A549 (cell line): ENCODE measurements at regions of chr1 and their contacts with region 1.

Region 1: GRCh38 chr1:205485338-205486228 is 18.9 kb upstream of the CDK18 start:
- DNase-seq: peak; percentile 75 to 94
- ATAC-seq: peak; percentile 75 to 89
- H3K4me3 ChIP-seq: no peak overlapping the region
- H3K27ac ChIP-seq: no peak overlapping the region
- H3K4me1 ChIP-seq: no peaks in the 10 kb centered on the region
- CTCF ChIP-seq: peak; percentile 92
- EP300 ChIP-seq: no peak
- POLR2A ChIP-seq: no peak
- RAD21 ChIP-seq: peak; percentile 92 to 93

Region 2: GRCh38 chr1:205172729-205173366 is 312.7 kb before region 1 on chr1:
- CTCF ChIA-PET with region 1: no interaction called
- POLR2A ChIA-PET with region 1: no interaction called
- DNase-seq: peak; percentile 76 to 88
- ATAC-seq: peak; percentile 84 to 87
- H3K4me3 ChIP-seq: no peak overlapping the region
- H3K27ac ChIP-seq: peak overlapping the region; percentile 49 to 84; a peak in 5 of 6 replicates
- H3K4me1 ChIP-seq: peaks cover 47% of the 10 kb centered on the region
- CTCF ChIP-seq: no peak
- EP300 ChIP-seq: peak in 1 of 2 experiments; percentile 23; a peak in 1 of 5 replicates
- POLR2A ChIP-seq: no peak
- RAD21 ChIP-seq: no peak

Region 3: DNA sequence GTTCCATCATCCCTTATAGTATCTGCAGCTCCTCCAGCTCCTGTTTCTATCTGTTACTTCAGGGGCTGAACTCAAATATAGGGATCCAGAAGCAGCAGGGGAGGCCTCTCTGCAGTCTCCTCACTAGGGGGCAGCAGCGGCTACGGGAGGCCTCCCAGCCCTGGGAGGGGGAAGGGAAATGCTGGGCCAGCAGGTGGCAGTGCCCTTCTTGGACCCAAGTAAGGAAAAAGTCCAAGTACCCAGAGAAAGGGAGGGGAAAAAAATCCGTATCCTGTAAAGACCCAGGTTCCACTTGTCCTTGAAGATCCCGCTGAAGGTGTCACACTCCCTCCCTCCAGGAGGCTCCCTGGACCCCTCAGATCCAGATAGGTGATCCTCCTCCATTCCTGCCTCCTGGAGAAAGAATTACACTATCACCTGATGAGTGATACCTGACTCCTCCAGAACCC is 149.9 kb before region 1 on chr1:
- CTCF ChIA-PET with region 1: interaction called, 161 read pairs
- POLR2A ChIA-PET with region 1: no interaction called
- DNase-seq: peak; percentile 89 to 90
- ATAC-seq: peak; percentile 91 to 97
- H3K4me3 ChIP-seq: no peak overlapping the region
- H3K27ac ChIP-seq: no peak overlapping the region
- H3K4me1 ChIP-seq: peaks cover under 1% of the 10 kb centered on the region; the same call in 1 of the 3 replicates
- CTCF ChIP-seq: peak; percentile 99
- EP300 ChIP-seq: no peak
- POLR2A ChIP-seq: no peak
- RAD21 ChIP-seq: peak; percentile 88 to 92

Region 4: DNA sequence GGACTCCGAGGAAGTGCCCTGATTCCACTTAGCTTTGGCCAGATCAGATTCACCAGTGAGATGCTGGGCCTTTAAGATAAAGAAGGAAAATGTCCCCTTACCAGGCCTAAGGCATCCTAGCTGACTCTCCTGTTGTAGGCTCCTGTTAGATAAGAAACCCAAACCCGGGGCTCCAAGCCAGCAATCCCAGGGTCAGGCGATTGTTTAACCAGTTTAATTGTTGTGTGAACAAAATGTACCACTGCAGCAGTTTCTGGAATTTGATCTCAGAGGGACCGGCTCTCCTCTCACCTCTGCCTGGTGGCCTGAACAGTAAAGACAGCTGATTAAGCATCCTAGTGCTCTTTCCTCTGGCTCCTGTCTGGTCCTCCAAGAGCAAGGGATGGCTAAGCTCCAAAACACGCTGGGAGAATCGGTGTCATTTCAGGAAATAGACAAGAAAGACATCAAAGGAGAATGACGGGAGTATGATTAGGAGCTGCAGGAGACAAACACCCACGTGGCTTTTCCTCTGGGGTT is 119.6 kb before region 1 on chr1:
- CTCF ChIA-PET with region 1: interaction called, 14 read pairs
- POLR2A ChIA-PET with region 1: no interaction called
- DNase-seq: no peak
- ATAC-seq: peak; percentile 53 to 59; a peak in 3 of 6 replicates
- H3K4me3 ChIP-seq: no peak overlapping the region
- H3K27ac ChIP-seq: peak overlapping the region in 1 of 2 experiments; percentile 0; a peak in 1 of 6 replicates
- H3K4me1 ChIP-seq: peaks cover 12% of the 10 kb centered on the region
- CTCF ChIP-seq: no peak
- EP300 ChIP-seq: no peak
- POLR2A ChIP-seq: no peak
- RAD21 ChIP-seq: no peak

Region 5: GRCh38 chr1:205416322-205416721 is 69.3 kb before region 1 on chr1:
- CTCF ChIA-PET with region 1: interaction called, 20 read pairs
- POLR2A ChIA-PET with region 1: no interaction called
- DNase-seq: no peak
- ATAC-seq: no peak
- H3K4me3 ChIP-seq: no peak overlapping the region
- H3K27ac ChIP-seq: no peak overlapping the region
- H3K4me1 ChIP-seq: no peaks in the 10 kb centered on the region
- CTCF ChIP-seq: no peak
- EP300 ChIP-seq: no peak
- POLR2A ChIP-seq: no peak
- RAD21 ChIP-seq: no peak

Region 6: DNA sequence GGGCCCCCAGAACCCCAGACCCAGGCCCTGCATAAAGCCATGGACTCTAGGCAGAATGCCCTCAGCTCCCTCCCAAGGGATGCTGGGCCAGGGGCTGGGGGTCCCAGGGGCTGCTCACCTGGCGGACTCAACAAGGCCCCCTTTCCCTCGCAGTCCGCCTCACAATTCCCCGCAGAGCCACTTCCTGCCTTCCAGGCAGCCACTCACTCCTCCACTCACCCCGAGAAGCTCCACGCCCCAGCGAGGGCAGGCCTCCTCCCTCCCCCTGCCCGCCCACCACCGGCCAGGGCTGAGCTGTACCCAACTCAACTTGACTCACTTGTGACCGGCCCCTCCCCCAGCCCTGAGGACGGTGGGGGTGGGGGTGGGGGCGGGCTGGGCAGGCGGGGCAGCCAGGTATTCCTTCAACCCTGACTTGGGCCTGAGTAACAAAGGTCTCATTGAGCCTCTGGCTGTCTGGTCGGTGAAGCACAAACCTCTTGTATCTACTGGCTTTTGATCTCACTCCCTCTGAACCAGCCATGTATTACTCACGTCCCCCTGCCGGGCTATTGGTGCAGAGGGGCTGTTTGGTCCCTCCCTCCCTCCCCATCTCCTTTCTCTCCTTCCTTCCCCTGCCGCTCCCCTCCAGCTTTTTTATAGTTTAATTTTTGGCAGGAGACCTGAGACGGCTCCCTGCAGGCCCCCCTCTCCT is 35.7 kb before region 1 on chr1:
- CTCF ChIA-PET with region 1: interaction called, 46 read pairs
- POLR2A ChIA-PET with region 1: no interaction called
- DNase-seq: peak; percentile 35 to 69
- ATAC-seq: peak; percentile 40 to 68; a peak in 5 of 6 replicates
- H3K4me3 ChIP-seq: no peak overlapping the region
- H3K27ac ChIP-seq: peak overlapping the region; percentile 36 to 53; a peak in 5 of 6 replicates
- H3K4me1 ChIP-seq: peaks cover 12% of the 10 kb centered on the region
- CTCF ChIP-seq: no peak
- EP300 ChIP-seq: no peak
- POLR2A ChIP-seq: no peak
- RAD21 ChIP-seq: no peak

Region 7: DNA sequence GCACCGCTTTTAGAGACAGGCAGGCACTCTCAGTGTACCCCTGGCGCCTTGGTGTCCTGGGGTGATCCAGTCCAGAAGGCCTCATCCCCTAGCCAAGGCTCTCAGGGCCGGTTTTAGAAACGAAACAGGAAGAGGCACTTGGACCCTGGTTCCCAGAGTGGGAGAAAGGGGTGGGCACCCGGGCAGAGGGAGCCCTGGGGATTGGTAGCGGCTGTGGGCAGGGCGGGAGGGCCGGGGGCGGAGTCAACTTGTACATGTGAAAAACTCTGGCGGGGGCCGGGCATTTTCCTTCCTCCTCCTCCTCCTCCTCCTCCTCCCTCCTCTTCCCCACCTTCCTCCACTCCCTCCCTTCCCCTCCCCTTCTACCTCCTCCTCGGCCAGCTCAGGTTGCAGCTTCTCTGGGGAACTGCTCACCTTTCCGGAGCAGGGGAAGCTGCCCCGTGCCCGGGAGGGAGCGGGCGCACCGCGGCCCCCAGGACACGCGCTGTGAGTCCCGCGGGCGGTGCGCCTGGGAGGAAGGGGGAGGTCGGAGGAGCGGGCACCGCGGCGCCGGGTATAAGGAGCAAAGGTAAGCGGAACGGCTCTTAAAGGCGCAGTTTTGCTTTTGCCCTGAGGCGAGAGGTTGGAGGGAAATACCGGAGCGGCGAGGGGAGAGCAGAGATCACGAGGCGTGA is 18.9 kb after region 1 on chr1 and contains the start of gene CDK18:
- CTCF ChIA-PET with region 1: interaction called, 143 read pairs
- POLR2A ChIA-PET with region 1: no interaction called
- DNase-seq: peak in 1 of 2 experiments; percentile 83
- ATAC-seq: peak; percentile 58 to 87; a peak in 5 of 6 replicates
- H3K4me3 ChIP-seq: peak within 1 kb of the TSS; percentile 65
- H3K27ac ChIP-seq: peak within 1 kb of the TSS; percentile 72 to 83
- H3K4me1 ChIP-seq: peaks cover 6% of the 10 kb centered on the region; the same call in 1 of the 3 replicates
- CTCF ChIP-seq: no peak
- EP300 ChIP-seq: no peak
- POLR2A ChIP-seq: no peak
- RAD21 ChIP-seq: no peak
- polyA plus RNA-seq, gene CDK18: 0.75 and 1.3 TPM in 2 replicates

Region 8: DNA sequence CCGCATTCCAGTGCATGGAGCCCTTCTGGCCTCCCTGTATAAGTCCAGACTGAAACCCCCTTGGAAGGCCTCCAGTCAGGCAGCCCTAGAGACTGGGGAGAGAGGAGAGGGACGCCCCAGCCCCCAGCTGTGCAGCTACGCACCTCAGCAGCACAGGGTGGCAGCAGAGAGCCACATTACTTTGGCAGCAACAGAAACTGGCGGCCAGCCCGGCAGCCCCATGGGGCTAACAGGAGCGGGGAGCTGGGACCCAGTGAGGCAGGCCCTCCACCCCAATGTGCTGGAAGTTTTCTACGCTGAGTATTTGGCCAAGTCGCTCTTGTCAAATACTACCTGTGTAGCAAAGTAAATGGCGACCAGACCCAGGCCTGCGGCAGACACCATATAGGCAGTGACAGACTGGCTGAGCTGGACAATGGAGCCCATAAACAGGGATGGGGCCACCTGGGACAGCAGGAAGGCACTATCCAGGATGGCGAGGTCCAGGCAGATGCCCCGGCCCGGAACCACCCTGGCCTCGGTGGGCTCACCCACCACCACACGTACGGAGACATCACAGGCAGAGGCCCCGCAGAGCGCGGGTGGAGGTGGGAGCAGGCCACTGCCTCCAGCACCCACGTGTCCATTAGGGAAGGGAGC is 173.5 kb after region 1 on chr1:
- CTCF ChIA-PET with region 1: interaction called, 15 read pairs
- POLR2A ChIA-PET with region 1: no interaction called
- DNase-seq: peak; percentile 56 to 87
- ATAC-seq: peak; percentile 85 to 94
- H3K4me3 ChIP-seq: no peak overlapping the region
- H3K27ac ChIP-seq: no peak overlapping the region
- H3K4me1 ChIP-seq: no peaks in the 10 kb centered on the region
- CTCF ChIP-seq: peak; percentile 79
- EP300 ChIP-seq: no peak
- POLR2A ChIP-seq: no peak
- RAD21 ChIP-seq: peak; percentile 83 to 88